AG04450 (cell line): ENCODE measurements at regions of chr1 and their contacts with region 1.

Region 1: DNA sequence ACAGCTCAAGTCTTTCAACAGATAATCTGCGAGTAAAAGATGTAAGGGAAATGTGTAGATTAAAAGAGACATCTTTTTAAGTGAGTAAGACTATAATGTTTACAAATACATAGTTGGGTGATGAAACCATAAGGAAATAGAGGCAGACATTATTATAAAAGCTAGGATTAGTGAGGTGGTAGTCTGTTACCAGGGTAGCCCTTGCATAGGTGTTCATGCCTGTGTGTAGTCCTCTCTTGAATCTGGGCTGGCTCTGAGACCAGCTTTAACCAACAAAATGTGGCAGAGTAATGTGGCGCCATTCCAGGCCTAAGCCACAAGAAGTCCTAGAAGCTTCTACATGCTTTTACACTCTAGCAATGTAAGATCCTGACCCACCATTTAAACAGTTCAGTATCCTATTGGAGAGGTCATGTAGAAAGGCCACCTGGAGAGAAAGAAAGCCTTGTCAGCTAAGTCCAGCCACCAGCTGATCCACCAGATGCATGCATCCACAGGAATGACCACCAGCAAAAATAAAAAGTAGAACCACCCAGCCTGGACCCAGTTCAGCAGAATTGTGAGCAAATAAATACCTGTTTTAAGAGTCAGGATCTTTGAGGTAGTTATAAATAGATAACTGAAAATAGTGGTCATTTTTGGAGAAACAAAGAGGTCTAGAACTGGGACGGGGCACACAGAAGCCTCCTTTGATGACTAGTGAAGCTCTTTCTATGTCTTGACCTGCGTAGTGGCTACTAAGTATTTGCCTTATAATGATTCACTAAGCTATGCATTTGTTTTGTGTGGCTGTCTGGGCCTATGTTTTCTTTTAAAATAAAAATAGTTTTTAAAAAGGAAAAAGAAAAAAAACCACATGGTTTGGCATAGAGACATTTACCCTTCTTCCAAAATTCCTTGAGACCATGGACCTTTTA is 8.1 kb downstream of the NIBAN1 start:
- DNase-seq: no peak
- H3K4me3 ChIP-seq: no peak overlapping the region
- H3K27ac ChIP-seq: peak overlapping the region; percentile 60
- H3K27me3 ChIP-seq: no peaks in the 10 kb centered on the region
- CTCF ChIP-seq: no peak

Region 2: GRCh38 chr1:184910005-184910404 is 56.2 kb before region 1 on chr1:
- CTCF ChIA-PET with region 1: interaction called, 10 read pairs
- POLR2A ChIA-PET with region 1: no interaction called
- DNase-seq: no peak
- H3K4me3 ChIP-seq: no peak overlapping the region
- H3K27ac ChIP-seq: no peak overlapping the region
- H3K27me3 ChIP-seq: no peaks in the 10 kb centered on the region
- CTCF ChIP-seq: no peak